ENCODE measurements at regions of chr1 and their contacts with region 1.

Region 1: DNA sequence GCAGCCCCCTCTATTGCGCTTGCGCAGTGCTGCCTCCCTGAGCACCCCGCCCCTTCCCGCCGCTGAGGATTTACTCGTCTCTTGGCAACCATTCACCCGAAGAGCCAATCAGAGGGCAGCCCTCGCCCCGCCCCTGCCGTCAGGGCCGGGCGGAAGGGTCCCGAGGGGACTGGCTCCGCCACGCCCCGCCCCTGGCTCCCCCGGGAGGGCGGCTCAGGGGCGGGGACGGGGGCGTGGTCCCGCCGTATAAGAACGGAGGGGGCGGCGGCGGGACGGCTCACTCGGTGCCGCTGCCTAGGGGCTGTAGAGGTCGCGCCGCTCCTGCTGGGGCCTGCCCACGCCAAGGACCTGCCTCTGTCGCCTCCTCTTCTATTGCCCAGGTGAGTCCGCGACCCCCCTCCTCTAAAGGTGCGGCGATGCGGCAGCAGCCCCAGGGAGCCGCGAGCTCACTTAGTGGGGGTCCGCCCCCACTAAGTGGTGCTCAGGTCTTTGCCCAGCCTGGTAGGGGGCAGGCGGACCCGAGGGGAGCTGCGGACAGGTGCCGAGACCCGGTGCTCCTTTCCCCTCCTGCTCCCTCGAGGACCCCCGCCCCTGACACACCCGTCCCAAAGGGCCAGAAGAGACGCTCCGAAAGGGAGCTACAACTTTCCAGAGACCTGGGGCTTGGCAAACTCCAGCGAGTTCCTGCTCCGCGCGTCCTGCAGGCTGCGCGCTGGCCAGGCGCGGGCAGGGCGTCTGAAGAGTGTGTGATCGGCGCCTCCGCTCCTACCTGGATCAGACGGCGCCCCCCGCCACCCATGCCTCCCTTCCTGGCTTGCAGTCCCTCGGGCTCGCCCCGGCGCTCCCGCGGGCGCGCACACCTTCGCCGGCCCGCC is at the start of gene TENT5C:
- DNase-seq: peak; percentile 94 to 99
- H3K4me3 ChIP-seq: peak within 1 kb of the TSS; percentile 85 to 88
- H3K27ac ChIP-seq: peak within 1 kb of the TSS; percentile 83 to 90
- H3K4me1 ChIP-seq: peaks cover 0 to 9% of the 10 kb centered on the region in 2 donors
- H3K27me3 ChIP-seq: no peaks in the 10 kb centered on the region
- CTCF ChIP-seq: no peak
- total RNA-seq, gene TENT5C: 0.32 TPM

Region 2: GRCh38 chr1:116990612-116991151 is 615.3 kb before region 1 on chr1:
- intact Hi-C with region 1: no loop called
- DNase-seq: peak; percentile 50 to 88
- H3K4me3 ChIP-seq: no peak overlapping the region
- H3K27ac ChIP-seq: peak overlapping the region; percentile 40 to 66
- H3K4me1 ChIP-seq: peaks cover 0 to 10% of the 10 kb centered on the region in 2 donors
- H3K27me3 ChIP-seq: no peaks in the 10 kb centered on the region
- CTCF ChIP-seq: no peak

Region 3: DNA sequence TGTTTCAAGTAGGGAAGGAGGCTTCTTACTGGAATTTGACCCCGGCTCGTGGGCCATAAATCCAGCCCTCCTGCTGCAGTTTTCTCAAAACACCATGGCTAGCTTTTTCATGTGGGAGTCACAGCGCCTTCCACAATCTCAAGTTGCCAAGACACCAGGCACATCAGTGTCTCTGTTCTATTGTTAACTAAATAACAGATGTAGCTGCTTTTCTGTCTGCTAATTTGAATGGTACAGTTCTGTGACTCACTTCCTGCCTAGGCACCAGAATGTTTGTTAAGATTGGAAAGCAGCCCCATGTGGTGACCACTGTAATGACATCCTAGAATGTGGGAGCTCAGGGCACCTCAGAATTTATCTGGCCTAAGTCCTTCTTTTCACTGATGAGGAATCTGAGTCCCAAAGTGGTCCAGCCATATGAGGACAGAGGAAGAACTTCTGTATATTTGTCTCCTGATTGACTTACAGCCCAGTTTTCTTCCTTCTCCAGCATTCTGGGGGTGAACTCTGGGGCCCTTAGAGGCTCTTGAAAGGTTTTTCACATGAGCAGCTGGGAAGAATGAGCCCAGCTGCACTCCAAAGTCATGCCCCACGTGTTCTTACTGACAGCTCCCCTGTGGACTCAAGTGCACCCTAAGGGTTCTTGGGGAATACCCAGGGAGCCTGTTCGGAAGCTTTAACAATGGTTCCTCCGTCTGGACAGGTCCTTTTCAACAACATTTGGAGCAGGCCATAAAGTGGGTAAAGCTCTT is 512.0 kb before region 1 on chr1:
- intact Hi-C with region 1: loop called (anchors 10 kb)
- DNase-seq: peak in 1 of 2 donors; percentile 63
- H3K4me3 ChIP-seq: no peak overlapping the region
- H3K27ac ChIP-seq: peak overlapping the region; percentile 89 to 91
- H3K4me1 ChIP-seq: peaks cover 6 to 32% of the 10 kb centered on the region in 2 donors
- H3K27me3 ChIP-seq: no peaks in the 10 kb centered on the region
- CTCF ChIP-seq: peak; percentile 36 to 43 (median 41)

Region 4: DNA sequence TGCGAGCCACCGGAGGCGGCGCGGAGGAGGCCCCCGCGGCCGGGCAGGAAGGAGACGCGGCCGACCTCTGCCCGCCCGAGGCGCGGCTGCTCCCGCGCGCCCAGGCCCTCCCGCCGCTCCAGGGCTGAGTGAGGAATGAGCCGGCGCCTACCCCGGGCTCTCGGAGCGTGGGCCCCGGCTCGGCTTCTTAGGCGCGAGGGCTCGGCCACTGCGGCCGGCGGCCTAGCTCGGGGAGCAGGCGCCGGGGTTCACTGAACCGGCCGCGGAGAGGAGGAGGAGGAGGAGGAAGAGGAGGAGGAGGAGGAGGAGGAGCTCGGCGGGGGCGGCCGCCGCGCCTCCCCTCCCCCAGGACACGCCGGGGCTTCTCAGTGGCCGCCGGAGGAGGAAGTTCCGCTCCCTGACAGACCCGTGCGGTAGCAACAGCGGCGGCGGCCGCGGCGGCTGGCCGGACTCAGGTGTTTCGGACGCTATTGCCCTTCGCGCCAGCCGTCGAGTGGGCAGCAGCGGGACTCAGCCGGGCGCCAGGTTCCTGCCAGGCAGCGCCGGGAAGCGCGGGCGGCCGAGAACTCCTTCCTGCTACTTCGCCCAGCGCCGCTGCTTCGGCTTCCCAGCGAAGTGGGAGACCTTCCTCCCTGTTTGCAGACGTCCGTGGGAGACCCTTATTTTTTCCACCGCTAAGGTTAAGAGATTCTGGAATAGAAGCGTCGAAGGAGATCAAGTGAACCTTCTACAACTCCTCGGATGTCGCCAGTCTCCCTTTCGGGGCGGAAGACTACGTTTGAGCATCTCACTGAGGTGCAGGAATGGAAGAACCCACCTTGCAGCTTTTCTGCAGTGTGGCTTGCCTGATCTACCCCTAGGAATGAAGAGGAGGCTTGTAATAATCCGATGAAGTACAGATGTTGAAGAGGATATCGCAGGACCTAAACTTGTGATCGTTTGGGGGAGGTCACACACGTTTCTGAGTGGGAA is 238.7 kb before region 1 on chr1 and contains the start of gene MAN1A2:
- intact Hi-C with region 1: loop called (anchors 1 kb)
- DNase-seq: peak; percentile 59 to 91
- H3K4me3 ChIP-seq: peak within 1 kb of the TSS; percentile 84 to 86
- H3K27ac ChIP-seq: peak within 1 kb of the TSS; percentile 97 to 98
- H3K4me1 ChIP-seq: peaks cover 7 to 14% of the 10 kb centered on the region in 2 donors
- H3K27me3 ChIP-seq: no peaks in the 10 kb centered on the region
- CTCF ChIP-seq: no peak
- total RNA-seq, gene MAN1A2: 25.4 TPM

Region 5: GRCh38 chr1:117622726-117623125 is 16.7 kb after region 1 on chr1:
- intact Hi-C with region 1: no loop called
- DNase-seq: peak in 1 of 2 donors; percentile 60
- H3K4me3 ChIP-seq: no peak overlapping the region
- H3K27ac ChIP-seq: no peak overlapping the region
- H3K4me1 ChIP-seq: no peaks in the 10 kb centered on the region
- H3K27me3 ChIP-seq: no peaks in the 10 kb centered on the region
- CTCF ChIP-seq: no peak

Region 6: DNA sequence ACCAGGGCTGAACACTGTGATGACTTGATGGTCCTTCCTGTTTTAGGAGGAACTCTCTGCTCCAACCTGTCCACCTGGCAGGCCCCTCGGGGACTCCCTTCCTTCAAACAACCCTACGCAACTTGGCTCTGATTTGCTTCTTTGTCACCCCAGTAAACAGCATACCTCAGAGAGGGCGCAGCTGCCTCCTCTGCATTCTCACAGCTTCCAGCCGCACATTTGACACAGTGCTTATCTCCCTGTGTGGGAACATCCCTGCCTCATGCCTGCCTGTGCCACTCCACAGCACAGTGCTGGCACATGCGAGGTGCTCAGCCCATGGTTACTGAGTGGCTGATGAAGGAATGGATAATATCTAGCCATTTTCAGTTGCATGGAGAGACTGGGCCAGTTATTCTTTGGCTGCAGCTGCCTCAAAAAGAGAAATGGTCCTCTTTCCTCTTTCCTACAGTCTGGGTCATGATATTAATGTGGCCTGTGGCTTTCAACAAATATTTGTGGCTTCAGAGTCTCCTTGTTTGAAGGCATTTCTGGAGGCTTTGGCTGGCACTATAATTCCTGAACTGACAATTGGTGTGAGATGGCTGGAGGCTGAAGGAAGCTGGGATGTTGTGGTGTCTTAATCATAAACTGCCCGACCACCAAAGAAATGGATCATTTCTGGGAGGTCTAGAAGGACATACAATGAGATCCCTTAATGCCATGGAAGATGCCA is 77.7 kb after region 1 on chr1:
- intact Hi-C with region 1: loop called (anchors 2 kb)
- DNase-seq: no peak
- H3K4me3 ChIP-seq: no peak overlapping the region
- H3K27ac ChIP-seq: peak overlapping the region in 1 of 2 donors; percentile 5
- H3K4me1 ChIP-seq: peaks cover 0 to 35% of the 10 kb centered on the region in 2 donors
- H3K27me3 ChIP-seq: no peaks in the 10 kb centered on the region
- CTCF ChIP-seq: no peak

Region 7: GRCh38 chr1:117702654-117703053 is 96.6 kb after region 1 on chr1:
- intact Hi-C with region 1: no loop called
- DNase-seq: no peak
- H3K4me3 ChIP-seq: no peak overlapping the region
- H3K27ac ChIP-seq: no peak overlapping the region
- H3K4me1 ChIP-seq: peaks cover 3 to 7% of the 10 kb centered on the region in 2 donors
- H3K27me3 ChIP-seq: no peaks in the 10 kb centered on the region
- CTCF ChIP-seq: no peak

Region 8: GRCh38 chr1:117758444-117759316 is 152.7 kb after region 1 on chr1:
- intact Hi-C with region 1: loop called (anchors 1 kb)
- DNase-seq: peak in 1 of 2 donors; percentile 82
- H3K4me3 ChIP-seq: peak overlapping the region; percentile 52 to 68
- H3K27ac ChIP-seq: no peak overlapping the region
- H3K4me1 ChIP-seq: no peaks in the 10 kb centered on the region
- H3K27me3 ChIP-seq: no peaks in the 10 kb centered on the region
- CTCF ChIP-seq: peak; percentile 66 to 87 (median 86)

Region 9: DNA sequence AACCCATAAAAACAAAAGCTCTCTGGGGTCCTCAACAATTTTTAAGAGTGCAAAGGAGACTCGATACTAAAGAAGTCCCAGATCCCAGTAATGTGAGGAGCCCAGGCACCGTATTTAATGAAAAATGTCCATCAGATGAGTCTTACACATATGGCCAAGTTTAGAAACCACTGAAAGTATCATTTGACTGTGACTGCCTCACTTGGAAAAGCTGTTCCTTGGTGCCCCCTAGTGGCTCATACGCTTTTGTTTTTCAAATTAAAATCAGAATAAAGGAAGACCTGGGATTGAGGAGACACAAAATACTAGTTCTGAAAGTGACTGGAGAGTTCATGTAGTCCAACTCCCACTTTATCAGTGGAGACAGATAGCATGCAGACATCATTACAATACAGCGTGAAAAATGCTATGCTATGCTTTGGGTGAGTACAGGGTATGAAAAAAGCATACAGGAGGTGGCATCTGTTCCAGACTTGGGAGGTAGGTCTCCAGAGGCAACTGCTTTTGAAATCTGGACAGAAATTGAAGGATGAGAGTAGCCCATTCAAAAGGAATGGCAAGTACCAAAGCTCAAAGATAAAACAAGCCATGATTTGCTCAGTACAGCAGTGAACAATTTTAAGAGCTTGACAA is 289.6 kb after region 1 on chr1:
- intact Hi-C with region 1: loop called (anchors 10 kb)
- DNase-seq: peak in 1 of 2 donors; percentile 82
- H3K4me3 ChIP-seq: no peak overlapping the region
- H3K27ac ChIP-seq: no peak overlapping the region
- H3K4me1 ChIP-seq: no peaks in the 10 kb centered on the region
- H3K27me3 ChIP-seq: no peaks in the 10 kb centered on the region
- CTCF ChIP-seq: peak; percentile 44 to 79 (median 55)